CD8-positive, alpha-beta memory T cell (primary cell): ENCODE measurements at regions of chr19 and their contacts with region 1.

Region 1: DNA sequence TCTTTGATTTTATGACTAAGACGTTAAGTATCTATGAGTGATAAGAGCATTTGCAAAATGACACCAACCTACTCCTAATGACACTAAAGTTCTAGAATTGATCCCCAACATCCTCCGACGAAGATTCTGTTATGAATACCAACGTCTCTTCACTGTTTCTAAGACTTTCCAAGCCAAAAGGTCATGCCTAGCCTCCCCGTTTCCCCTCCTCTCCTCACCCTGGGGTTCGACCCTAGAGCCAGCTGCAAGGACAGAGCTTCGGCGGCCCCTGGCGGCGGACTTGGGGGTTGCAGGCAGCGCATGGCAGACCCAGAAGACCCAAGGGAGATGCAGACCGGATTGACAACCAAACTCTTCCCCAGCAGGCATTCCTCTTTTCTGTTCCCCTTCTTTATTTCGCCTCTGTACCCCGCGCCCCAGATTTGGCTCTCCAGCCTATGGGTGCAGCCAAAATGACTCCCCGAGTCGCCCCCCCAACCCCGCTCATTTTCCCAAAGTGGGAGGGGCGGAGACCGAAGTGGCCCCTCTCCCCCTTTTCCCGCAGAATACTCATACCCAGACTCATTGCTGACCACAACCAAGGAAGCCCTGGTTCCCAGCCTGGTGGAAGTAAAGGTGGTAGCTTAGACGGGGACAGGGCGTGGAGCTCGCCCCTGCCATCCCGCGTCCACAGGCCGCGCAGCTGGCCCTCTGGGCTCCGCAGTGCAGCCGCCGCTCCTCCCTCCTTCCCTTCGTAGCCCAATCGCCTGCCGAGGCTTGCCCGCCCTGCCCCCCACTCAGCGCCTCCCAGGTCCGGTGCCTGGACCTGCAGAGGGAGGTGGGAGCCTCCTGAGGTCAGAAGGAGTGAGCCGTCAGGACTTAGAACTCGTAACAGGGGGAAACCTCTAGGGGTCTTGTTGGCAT is 4.1 kb upstream of the EML2 start:
- DNase-seq: peak; percentile 77 to 90 (median 82)
- H3K4me3 ChIP-seq: no peak overlapping the region
- H3K4me3 Mint-ChIP-seq: peak overlapping the region; percentile 67 to 89 (median 80)
- H3K27ac ChIP-seq: peak overlapping the region; percentile 84
- H3K27ac Mint-ChIP-seq: peak overlapping the region; percentile 83 to 98 (median 93)
- H3K4me1 ChIP-seq: peaks cover 47% of the 10 kb centered on the region
- H3K4me1 Mint-ChIP-seq: peaks cover 39 to 59% (median 41%) of the 10 kb centered on the region in 3 donors
- H3K27me3 ChIP-seq: no peaks in the 10 kb centered on the region
- H3K27me3 Mint-ChIP-seq: peaks cover 0 to 2% of the 10 kb centered on the region in 2 donors

Region 2: GRCh38 chr19:45478454-45479238 is 164.6 kb before region 1 on chr19:
- CTCF ChIA-PET with region 1: interaction called, 15 read pairs
- POLR2A ChIA-PET with region 1: interaction called, 4 read pairs
- DNase-seq: peak; percentile 80 to 92 (median 89)
- H3K4me3 ChIP-seq: peak overlapping the region; percentile 80
- H3K4me3 Mint-ChIP-seq: peak overlapping the region; percentile 87 to 96 (median 91)
- H3K27ac ChIP-seq: peak overlapping the region; percentile 96
- H3K27ac Mint-ChIP-seq: peak overlapping the region; percentile 97 to 100 (median 99)
- H3K4me1 ChIP-seq: peaks cover 16% of the 10 kb centered on the region
- H3K4me1 Mint-ChIP-seq: peaks cover 39 to 43% (median 39%) of the 10 kb centered on the region in 3 donors
- H3K27me3 ChIP-seq: no peaks in the 10 kb centered on the region
- H3K27me3 Mint-ChIP-seq: peaks cover 0 to 31% of the 10 kb centered on the region in 2 donors

Region 3: DNA sequence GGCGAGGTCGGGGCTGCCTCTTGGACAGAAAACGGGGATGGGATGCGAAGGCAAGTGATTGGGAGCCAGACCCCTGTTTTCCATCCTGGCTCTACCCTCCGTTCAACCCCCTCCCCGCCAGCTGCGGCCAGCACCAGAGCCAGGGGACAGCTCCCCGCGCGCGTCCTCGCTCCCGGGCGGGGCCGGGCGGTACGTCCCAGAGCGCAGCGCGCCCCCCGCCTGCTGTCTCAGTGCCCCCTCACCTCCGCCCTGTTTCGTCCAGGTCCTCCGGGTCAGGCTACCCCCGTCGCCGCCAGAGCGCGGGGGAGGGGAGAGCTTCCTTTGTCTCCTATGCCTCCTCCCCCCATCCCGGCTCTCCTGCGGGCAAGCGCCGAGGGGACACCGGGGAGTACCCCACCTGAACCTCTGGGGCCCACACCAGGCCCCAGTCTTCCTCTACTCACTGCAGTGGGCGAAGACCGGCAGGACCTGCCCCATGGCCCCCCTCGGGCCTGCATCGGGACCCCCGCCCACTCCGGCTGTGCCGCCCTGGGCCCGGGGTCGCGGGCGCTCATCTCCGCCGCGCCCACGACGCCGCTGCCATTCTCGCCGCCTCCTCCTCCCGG is 146.8 kb before region 1 on chr19:
- CTCF ChIA-PET with region 1: interaction called, 32 read pairs
- POLR2A ChIA-PET with region 1: no interaction called
- DNase-seq: peak in 3 of 5 donors; percentile 38 to 71 (median 62)
- H3K4me3 ChIP-seq: peak overlapping the region; percentile 47
- H3K4me3 Mint-ChIP-seq: peak overlapping the region; percentile 33 to 90 (median 82)
- H3K27ac ChIP-seq: no peak overlapping the region
- H3K27ac Mint-ChIP-seq: peak overlapping the region in 3 of 8 donors; percentile 43 to 81 (median 53)
- H3K4me1 ChIP-seq: peaks cover 41% of the 10 kb centered on the region
- H3K4me1 Mint-ChIP-seq: peaks cover 31 to 48% (median 46%) of the 10 kb centered on the region in 3 donors
- H3K27me3 ChIP-seq: peaks cover 15% of the 10 kb centered on the region
- H3K27me3 Mint-ChIP-seq: peaks cover 14 to 22% of the 10 kb centered on the region in 2 donors

Region 4: DNA sequence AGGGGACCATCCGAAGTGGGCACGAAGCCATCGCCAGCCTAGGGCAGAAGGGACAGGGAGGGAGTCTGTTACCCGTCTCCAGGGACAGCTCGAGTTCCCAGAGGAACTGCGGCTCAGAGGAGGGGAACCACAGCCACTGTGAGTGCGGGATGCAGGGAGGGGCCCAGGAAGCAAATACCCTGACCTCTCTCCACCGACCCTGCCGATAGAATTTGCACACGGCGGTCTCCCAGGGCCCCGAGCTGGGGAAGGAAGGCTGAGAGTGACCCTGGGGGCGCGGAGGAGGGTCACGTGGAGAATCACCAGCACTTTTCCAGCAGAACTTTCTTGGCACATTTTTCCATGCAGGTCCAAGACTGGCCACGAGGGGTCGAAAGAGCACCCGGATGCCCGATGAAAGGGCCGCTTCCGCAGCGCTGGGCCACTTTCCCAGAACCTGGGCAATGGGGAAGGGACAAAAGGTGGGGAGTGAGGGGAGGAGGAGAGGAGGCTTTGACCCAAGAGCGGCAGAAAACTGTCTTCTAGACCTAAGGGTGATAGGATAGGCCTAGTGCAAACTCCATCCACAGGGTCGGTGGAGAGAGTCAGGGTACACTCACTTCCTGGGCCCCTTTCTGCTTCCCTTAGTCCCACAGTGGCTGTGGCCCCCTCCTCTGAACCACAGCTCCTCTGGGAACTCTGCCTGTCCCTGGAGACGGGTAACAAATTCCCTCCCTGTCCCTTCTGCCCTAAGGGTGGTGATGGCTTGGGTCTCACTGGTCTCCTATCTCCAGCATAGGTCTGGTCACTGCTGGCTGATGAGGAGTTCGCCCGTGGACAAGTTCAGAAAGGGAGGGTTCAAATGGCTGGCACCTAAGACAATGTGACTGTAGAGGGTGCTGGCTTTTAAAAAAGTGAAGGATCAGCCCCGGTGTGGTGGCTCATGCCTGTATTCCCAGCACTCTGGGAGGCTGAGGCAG is 35.9 kb before region 1 on chr19:
- CTCF ChIA-PET with region 1: interaction called, 78 read pairs
- POLR2A ChIA-PET with region 1: no interaction called
- DNase-seq: peak; percentile 19 to 62 (median 23)
- H3K4me3 ChIP-seq: peak overlapping the region; percentile 25
- H3K4me3 Mint-ChIP-seq: peak overlapping the region in 2 of 7 donors; percentile 32 to 68
- H3K27ac ChIP-seq: no peak overlapping the region
- H3K27ac Mint-ChIP-seq: peak overlapping the region in 4 of 8 donors; percentile 68 to 85 (median 79)
- H3K4me1 ChIP-seq: peaks cover 8% of the 10 kb centered on the region
- H3K4me1 Mint-ChIP-seq: peaks cover 4 to 9% (median 9%) of the 10 kb centered on the region in 3 donors
- H3K27me3 ChIP-seq: peaks cover 11% of the 10 kb centered on the region
- H3K27me3 Mint-ChIP-seq: peaks cover 10 to 11% of the 10 kb centered on the region in 2 donors

Region 5: DNA sequence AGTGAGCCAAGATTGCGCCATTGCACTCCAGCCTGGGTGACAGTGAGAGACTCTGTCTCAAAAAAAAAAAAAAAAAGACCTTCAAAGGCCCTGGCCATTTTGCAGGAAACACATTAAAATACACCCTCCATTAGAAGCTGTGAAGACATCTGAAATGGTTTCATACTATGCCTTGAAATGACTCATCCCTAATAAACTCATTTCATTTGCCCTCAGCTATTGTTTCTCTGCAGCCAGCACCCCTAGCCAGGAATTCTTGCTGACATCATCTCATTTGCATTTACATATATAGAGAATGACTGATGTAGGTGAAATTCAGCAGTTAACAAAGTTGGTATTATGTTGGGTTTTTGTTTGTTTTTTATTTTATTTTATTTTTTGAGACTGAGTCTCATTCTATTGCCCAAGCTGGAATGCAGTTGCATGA is 12.8 kb before region 1 on chr19:
- CTCF ChIA-PET with region 1: interaction called, 10 read pairs
- POLR2A ChIA-PET with region 1: interaction called, 3 read pairs
- DNase-seq: no peak
- H3K4me3 ChIP-seq: no peak overlapping the region
- H3K4me3 Mint-ChIP-seq: no peak overlapping the region
- H3K27ac ChIP-seq: no peak overlapping the region
- H3K27ac Mint-ChIP-seq: no peak overlapping the region
- H3K4me1 ChIP-seq: no peaks in the 10 kb centered on the region
- H3K4me1 Mint-ChIP-seq: peaks cover 0 to 2% (median 2%) of the 10 kb centered on the region in 3 donors
- H3K27me3 ChIP-seq: no peaks in the 10 kb centered on the region
- H3K27me3 Mint-ChIP-seq: peaks cover 0 to 2% of the 10 kb centered on the region in 2 donors

Region 6: GRCh38 chr19:45681391-45682015 is 38.2 kb after region 1 on chr19:
- CTCF ChIA-PET with region 1: interaction called, 13 read pairs
- POLR2A ChIA-PET with region 1: interaction called, 3 read pairs
- DNase-seq: peak; percentile 77 to 88 (median 83)
- H3K4me3 ChIP-seq: peak overlapping the region; percentile 46
- H3K4me3 Mint-ChIP-seq: peak overlapping the region; percentile 79 to 89 (median 84)
- H3K27ac ChIP-seq: no peak overlapping the region
- H3K27ac Mint-ChIP-seq: peak overlapping the region in 7 of 8 donors; percentile 66 to 92 (median 80)
- H3K4me1 ChIP-seq: peaks cover 18% of the 10 kb centered on the region
- H3K4me1 Mint-ChIP-seq: peaks cover 13 to 24% (median 19%) of the 10 kb centered on the region in 3 donors
- H3K27me3 ChIP-seq: no peaks in the 10 kb centered on the region
- H3K27me3 Mint-ChIP-seq: no peaks in the 10 kb centered on the region